Activated T-helper 1 cell treated with anti-CD3 and anti-CD28 coated beads, Interleukin-12 subunit alpha, Interleukin-12 subunit beta, Interleukin-2, Interleukin-4 antibody, amounts not matched to agents 30 ng/mL and 10 ng/mL and 1 ng/mL, durations not matched to agents 14 hours and 24 hours and 36 hours (primary cell): ENCODE measurements at regions of chr10 and their contacts with region 1.

Region 1: DNA sequence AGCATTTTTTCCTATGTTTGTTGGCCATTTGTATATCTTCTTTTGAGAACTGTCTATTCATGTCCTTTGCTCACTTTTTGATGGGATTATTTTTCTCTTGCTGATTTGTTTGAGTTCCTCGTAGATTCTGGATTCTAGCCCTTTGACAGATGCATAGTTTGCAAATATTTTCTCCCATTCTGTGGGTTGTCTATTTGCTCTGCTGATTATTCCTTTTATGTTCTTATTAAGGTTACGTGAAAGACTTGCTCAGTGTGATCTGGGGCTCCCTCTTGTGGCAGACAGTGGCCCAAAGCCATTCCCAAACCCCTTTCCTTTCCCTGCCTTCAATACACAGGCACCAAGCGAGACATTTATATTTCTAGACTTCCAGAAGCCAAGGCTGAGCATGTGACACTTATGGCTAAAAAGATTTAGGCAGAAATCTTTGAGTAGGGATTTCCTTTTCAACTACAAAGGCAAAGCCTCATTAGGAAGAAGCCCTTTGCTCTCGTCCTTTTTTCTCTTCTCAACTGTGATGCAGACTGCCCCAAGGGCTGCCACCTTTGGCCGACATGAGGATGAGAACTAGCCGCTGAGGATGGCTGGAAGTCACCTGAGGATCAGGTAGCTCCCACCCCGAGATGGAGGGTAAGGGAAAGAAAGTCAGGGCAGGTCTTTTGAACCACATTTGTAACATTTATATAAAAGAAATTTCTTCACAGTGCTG is 23.6 kb downstream of the ST8SIA6 start:
- DNase-seq: peak; percentile 20
- H3K4me3 Mint-ChIP-seq: no peak overlapping the region
- H3K27ac Mint-ChIP-seq: no peak overlapping the region
- H3K4me1 Mint-ChIP-seq: peaks cover 59% of the 10 kb centered on the region
- H3K27me3 Mint-ChIP-seq: peaks cover 10% of the 10 kb centered on the region

Region 2: GRCh38 chr10:16828114-16828568 is 602.7 kb before region 1 on chr10:
- intact Hi-C with region 1: loop called (anchors 1 kb)
- DNase-seq: peak; percentile 48
- H3K4me3 Mint-ChIP-seq: no peak overlapping the region
- H3K27ac Mint-ChIP-seq: no peak overlapping the region
- H3K4me1 Mint-ChIP-seq: peaks cover 7% of the 10 kb centered on the region
- H3K27me3 Mint-ChIP-seq: peaks cover 6% of the 10 kb centered on the region

Region 3: DNA sequence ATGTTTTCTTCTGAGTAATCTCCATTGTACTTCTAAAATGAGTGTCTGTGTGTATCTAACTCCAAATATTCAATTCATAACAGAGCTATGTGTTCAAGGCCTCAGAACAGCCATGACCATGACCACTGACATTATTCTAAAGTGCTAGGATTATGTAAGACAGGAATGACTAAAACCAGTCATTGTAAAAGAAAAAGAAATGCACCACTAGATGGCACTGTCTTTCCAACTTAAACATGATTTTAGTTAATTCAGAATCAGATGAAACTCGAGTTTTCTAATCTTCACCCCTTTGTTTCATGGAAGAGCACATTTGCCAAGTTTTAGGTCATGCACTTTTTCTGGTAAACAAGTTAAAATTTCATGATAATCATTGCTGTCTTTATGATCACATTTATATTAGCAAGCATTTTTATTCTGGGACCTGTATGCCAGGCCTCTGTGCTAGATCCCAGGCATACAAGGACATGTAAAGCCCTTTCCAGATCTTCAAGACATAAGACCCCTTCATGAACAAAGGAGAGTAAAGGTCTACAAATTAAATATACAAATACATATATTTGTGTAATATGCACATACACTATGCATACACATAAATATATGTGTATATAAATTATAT is 587.4 kb before region 1 on chr10:
- intact Hi-C with region 1: loop called (anchors 1 kb)
- DNase-seq: no peak
- H3K4me3 Mint-ChIP-seq: no peak overlapping the region
- H3K27ac Mint-ChIP-seq: no peak overlapping the region
- H3K4me1 Mint-ChIP-seq: no peaks in the 10 kb centered on the region
- H3K27me3 Mint-ChIP-seq: peaks cover 2% of the 10 kb centered on the region

Region 4: DNA sequence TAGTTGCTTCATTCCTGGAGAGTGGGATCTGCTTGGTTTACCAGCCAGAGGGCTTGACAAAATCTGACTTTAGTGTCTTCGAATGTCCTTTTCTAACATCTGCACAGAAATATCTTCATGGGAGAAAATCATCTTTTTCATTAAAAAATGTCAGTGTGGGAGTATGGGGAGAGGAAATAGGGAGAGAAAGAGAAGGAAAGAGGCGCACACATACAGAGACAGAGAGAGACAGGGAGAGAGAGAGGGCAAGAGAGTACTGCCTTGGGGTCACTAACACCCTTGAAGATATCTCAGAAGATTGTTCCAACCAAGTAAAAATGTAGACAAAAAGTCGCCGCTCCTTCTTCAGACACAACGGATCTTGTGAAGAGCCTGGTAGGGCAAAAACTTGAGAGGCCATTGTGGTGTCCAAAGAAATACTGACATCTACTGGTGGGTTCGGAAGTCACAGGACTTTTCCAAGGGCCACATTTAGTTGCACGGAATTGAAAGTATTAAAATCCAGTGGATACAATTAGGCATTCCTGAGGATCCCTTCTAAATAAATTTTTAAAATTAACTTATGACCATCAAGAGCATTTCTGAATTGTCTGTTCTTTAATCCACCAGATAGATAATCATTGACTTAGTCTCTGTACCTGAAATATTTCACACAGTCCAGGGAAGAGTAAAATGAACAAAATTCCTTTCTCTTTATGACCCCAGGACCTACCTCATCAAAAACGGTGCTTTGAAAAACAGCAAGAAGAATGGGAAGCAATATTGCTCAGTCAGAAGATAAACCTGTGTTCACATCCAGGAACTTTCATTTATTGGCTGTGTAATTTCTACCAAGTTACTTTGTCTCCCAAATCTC is 173.1 kb before region 1 on chr10:
- intact Hi-C with region 1: loop called (anchors 2 kb)
- DNase-seq: peak; percentile 52
- H3K4me3 Mint-ChIP-seq: no peak overlapping the region
- H3K27ac Mint-ChIP-seq: no peak overlapping the region
- H3K4me1 Mint-ChIP-seq: peaks cover 17% of the 10 kb centered on the region
- H3K27me3 Mint-ChIP-seq: peaks cover 10% of the 10 kb centered on the region

Region 5: GRCh38 chr10:17290226-17290625 is 140.6 kb before region 1 on chr10:
- intact Hi-C with region 1: loop called (anchors 5 kb)
- DNase-seq: no peak
- H3K4me3 Mint-ChIP-seq: no peak overlapping the region
- H3K27ac Mint-ChIP-seq: no peak overlapping the region
- H3K4me1 Mint-ChIP-seq: peaks cover 7% of the 10 kb centered on the region
- H3K27me3 Mint-ChIP-seq: peaks cover 13% of the 10 kb centered on the region

Region 6: DNA sequence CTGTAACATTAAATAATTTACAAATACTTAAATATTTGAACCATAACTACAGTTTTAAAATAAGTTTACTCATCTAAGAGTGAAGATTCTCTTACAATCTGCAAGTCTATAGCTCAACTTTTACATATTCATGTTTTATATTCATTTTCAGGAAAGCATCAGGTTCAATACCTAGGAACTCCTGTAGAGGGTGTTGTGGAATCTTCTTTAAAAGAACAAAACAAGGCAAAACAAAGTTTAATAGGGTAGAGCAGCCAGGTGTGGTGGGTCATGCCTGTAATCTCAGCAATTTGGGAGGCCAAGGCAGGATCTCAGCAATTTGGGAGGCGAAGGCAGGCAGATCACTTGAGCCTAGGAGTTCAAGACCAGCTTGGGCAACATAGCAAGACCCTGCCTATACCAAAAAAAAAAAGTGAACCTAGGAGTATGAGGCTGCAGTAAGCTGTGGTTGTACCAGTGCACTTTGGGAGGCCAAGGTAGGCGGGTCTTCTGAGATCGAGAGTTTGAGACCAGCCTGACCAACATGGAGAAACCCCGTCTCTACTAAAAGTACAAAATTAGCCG is 21.5 kb before region 1 on chr10:
- intact Hi-C with region 1: loop called (anchors 1 kb)
- DNase-seq: no peak
- H3K4me3 Mint-ChIP-seq: no peak overlapping the region
- H3K27ac Mint-ChIP-seq: no peak overlapping the region
- H3K4me1 Mint-ChIP-seq: peaks cover 14% of the 10 kb centered on the region
- H3K27me3 Mint-ChIP-seq: peaks cover 6% of the 10 kb centered on the region

Region 7: DNA sequence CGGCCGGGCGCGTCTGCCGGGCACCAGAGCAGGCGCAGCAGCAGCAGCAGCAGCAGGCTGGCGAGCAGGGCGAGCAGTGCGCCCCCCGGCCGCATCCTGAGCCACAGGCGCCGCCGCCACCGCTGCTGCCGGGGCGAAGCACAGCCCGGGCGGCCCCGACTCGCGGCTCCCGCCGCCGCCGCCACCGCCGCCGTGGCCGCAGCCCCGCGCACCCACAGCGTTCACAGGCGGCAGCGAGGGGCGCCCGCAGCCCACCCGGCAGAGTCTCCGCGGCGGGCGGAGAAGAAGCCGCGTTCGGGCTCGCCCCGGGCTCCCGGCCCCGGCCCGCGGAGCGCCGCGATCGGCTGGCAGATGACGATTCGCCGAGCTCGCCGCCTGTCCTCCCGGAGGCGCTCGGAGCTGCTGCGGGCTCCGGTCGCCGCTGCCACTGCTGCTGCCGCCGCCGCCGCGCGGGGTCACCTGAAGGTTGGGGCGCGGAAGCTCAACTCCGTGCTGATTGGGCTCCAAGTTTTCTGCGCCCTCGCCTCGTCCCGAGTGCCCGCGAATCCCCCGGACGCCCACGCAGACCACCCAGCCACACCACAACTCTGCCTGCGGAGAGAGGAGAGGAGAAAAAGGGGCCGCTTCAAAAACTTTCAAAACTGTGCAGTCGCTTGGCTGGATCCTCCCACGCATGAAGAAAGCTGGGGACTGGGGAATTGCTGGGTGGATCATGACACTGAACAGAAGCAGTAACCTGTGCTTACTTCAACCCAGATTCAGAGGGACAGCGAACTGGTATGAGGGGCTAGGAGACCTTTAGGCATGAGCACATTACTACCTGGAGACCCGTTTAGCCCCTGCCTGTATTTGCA is 23.6 kb after region 1 on chr10 and contains the start of gene ST8SIA6:
- intact Hi-C with region 1: loop called (anchors 1 kb)
- DNase-seq: peak; percentile 37
- H3K4me3 Mint-ChIP-seq: peak within 1 kb of the TSS; percentile 87
- H3K27ac Mint-ChIP-seq: peak within 1 kb of the TSS; percentile 65
- H3K4me1 Mint-ChIP-seq: peaks cover 23% of the 10 kb centered on the region
- H3K27me3 Mint-ChIP-seq: peaks cover 37% of the 10 kb centered on the region
- total RNA-seq, gene ST8SIA6: not detected in 2 replicates